ENCODE measurements at regions of chr17 and their contacts with region 1.

Region 1: GRCh38 chr17:30187573-30187972 is 47.9 kb downstream of the SLC6A4 start:
- DNase-seq: no peak

Region 2: DNA sequence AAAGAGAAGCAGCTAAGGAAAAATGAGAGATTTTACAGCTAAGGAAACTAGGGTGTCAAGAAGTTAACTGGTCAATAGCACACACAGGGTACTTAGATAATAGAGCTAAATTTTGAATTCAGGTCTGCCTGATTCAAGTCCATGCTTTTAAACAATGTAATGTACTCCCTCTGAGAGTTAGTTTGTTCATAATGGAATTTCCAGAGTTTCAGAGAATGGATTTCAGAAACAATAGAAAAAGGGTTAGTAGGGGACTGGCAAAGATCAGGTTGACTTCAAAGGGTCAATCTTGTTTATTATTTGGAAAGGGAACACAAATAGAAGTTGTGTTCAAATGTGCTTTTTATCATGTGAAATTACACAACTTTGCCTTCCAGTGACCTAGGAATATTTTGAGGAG is 53.0 kb before region 1 on chr17:
- intact Hi-C with region 1: loop called (anchors 10 kb)
- DNase-seq: no peak

Measured in cardiac septum (tissue), 1 donor.